Activated naive CD4-positive, alpha-beta T cell treated with anti-CD3 and anti-CD28 coated beads, Interleukin-2, amount 10 ng/mL, durations not matched to agents 7 days and 5 days (primary cell): ENCODE measurements at regions of chrX and their contacts with region 1.

Region 1: GRCh38 chrX:53481816-53482465 is 47.8 kb upstream of the HSD17B10 start:
- DNase-seq: peak; percentile 61
- H3K4me3 Mint-ChIP-seq: no peak overlapping the region
- H3K27ac Mint-ChIP-seq: no peak overlapping the region
- H3K4me1 Mint-ChIP-seq: no peaks in the 10 kb centered on the region
- H3K27me3 Mint-ChIP-seq: no peaks in the 10 kb centered on the region

Region 2: DNA sequence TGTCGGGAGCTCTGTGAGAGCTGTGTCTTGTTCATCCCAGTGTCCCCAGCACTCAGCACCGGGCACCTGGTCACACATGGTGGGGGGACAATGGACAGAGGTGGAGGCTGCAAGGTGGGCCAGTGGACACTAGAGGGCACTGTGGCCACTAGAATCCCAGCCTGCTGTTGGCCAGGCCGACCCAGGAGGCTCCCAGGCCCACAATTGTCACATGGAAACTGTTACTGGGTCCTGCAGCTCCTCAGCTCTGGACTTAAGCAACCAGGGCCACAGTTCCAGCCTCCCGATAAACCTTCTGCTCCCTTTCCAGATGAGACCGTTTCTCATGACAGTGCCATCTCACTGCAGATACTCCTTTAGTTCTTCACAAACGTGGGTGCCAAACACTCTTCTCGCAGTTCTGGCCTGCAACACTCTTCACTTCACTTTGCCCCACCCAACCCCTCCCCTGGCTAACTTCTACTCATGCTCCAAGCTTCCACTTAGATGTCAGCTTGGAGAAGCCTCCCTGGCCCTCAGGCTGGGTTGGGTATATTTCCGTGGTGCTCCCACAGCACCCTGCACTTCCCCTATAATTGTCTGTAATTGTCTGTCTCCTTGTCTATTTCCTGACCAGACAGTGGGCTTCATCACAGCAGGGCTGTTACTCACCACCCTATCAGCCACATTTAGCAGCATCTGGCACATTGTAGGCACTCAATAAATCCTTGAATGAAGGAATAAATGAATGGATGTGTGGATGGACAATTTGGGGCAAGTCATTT is 197.1 kb before region 1 on chrX:
- CTCF ChIA-PET with region 1: interaction called, 17 read pairs
- DNase-seq: peak; percentile 61
- H3K4me3 Mint-ChIP-seq: no peak overlapping the region
- H3K27ac Mint-ChIP-seq: no peak overlapping the region
- H3K4me1 Mint-ChIP-seq: peaks cover 41% of the 10 kb centered on the region
- H3K27me3 Mint-ChIP-seq: peaks cover 19% of the 10 kb centered on the region

Region 3: DNA sequence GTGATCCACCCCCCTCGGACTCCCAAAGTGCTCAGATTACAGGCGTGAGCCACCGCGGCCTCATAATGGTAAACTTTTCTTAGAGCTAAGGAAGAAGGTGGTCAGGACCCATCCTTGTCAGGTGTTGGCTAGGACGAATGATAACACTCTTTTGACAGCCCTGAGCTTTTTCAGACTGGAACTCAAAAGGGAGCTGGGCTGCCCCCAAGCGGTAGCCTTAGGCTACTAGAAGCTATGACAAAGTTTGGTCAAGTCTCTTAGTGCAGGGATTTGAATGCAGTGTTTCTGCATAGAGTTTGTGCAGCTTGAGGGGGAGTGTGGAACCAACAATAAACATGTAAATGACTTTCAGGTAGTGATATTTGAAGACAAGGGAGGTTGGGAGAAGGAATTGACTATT is 36.0 kb before region 1 on chrX:
- CTCF ChIA-PET with region 1: interaction called, 11 read pairs
- DNase-seq: peak; percentile 69
- H3K4me3 Mint-ChIP-seq: no peak overlapping the region
- H3K27ac Mint-ChIP-seq: no peak overlapping the region
- H3K4me1 Mint-ChIP-seq: peaks cover 11% of the 10 kb centered on the region
- H3K27me3 Mint-ChIP-seq: no peaks in the 10 kb centered on the region

Region 4: DNA sequence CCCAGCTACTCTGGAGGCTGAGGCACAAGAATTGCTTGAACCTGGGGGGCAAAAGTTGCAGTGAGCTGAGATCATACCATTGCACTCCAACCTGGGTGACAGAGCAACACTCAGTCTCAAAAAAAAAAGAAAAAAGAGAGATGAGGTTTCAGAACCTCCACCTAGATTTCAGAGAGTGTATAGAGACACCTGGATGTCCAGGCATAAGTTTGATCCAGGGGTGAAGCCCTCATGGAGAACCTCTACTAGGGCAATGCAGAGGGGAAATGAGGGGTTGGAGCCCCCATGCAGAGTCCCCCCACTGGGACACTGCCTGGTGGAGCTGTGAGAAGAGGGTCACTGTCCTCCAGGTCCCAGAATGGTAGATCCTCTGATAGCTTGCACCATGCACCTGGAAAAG is 45.1 kb after region 1 on chrX:
- CTCF ChIA-PET with region 1: no interaction called
- DNase-seq: no peak
- H3K4me3 Mint-ChIP-seq: no peak overlapping the region
- H3K27ac Mint-ChIP-seq: no peak overlapping the region
- H3K4me1 Mint-ChIP-seq: no peaks in the 10 kb centered on the region
- H3K27me3 Mint-ChIP-seq: no peaks in the 10 kb centered on the region